Gastrocnemius medialis (tissue), 4 donors: ENCODE measurements at regions of chr3 and their contacts with region 1.

Region 1: GRCh38 chr3:47250309-47251060 is 32.1 kb downstream of the KIF9 start:
- DNase-seq: peak; percentile 31 to 62
- ATAC-seq: peak; percentile 68 to 89
- H3K4me3 ChIP-seq: no peak overlapping the region
- H3K27ac ChIP-seq: peak overlapping the region in 1 of 4 donors; percentile 36
- H3K4me1 ChIP-seq: peaks cover 0 to 2% of the 10 kb centered on the region in 2 donors
- H3K27me3 ChIP-seq: no peaks in the 10 kb centered on the region
- CTCF ChIP-seq: peak; percentile 45 to 62 (median 53)
- POLR2A ChIP-seq: no peak

Region 2: GRCh38 chr3:47324278-47324865 is 73.9 kb after region 1 on chr3:
- in situ Hi-C with region 1: loop called in 3 of 4 experiments (anchors 10 kb)
- intact Hi-C with region 1: loop called (anchors 1 kb)
- DNase-seq: peak; percentile 16 to 42
- ATAC-seq: peak; percentile 94 to 99
- H3K4me3 ChIP-seq: no peak overlapping the region
- H3K27ac ChIP-seq: no peak overlapping the region
- H3K4me1 ChIP-seq: no peaks in the 10 kb centered on the region
- H3K27me3 ChIP-seq: no peaks in the 10 kb centered on the region
- CTCF ChIP-seq: peak; percentile 36 to 77 (median 64)
- POLR2A ChIP-seq: no peak

Region 3: DNA sequence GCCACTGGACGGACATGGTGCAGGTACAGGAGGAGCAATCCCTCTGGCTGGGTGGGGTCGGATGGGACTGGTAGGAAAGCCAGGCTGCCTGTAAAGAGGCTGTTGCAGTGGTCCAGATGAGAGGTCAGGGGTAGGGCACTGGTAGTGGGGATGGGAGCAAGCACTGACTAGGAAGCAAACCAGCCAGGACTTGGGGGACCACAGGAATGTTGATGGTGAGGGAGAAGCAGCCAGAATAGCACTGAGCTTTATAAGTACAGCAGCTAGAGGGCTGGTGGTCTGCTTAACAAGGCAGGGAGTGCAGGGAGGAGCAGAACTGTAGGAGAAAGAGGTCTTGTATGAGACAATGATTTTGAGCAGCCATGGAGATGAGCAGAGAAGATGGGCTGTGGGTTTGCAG is 91.7 kb after region 1 on chr3:
- in situ Hi-C with region 1: no loop called
- intact Hi-C with region 1: no loop called
- DNase-seq: no peak
- ATAC-seq: no peak
- H3K4me3 ChIP-seq: no peak overlapping the region
- H3K27ac ChIP-seq: no peak overlapping the region
- H3K4me1 ChIP-seq: no peaks in the 10 kb centered on the region
- H3K27me3 ChIP-seq: no peaks in the 10 kb centered on the region
- CTCF ChIP-seq: no peak
- POLR2A ChIP-seq: no peak

Region 4: DNA sequence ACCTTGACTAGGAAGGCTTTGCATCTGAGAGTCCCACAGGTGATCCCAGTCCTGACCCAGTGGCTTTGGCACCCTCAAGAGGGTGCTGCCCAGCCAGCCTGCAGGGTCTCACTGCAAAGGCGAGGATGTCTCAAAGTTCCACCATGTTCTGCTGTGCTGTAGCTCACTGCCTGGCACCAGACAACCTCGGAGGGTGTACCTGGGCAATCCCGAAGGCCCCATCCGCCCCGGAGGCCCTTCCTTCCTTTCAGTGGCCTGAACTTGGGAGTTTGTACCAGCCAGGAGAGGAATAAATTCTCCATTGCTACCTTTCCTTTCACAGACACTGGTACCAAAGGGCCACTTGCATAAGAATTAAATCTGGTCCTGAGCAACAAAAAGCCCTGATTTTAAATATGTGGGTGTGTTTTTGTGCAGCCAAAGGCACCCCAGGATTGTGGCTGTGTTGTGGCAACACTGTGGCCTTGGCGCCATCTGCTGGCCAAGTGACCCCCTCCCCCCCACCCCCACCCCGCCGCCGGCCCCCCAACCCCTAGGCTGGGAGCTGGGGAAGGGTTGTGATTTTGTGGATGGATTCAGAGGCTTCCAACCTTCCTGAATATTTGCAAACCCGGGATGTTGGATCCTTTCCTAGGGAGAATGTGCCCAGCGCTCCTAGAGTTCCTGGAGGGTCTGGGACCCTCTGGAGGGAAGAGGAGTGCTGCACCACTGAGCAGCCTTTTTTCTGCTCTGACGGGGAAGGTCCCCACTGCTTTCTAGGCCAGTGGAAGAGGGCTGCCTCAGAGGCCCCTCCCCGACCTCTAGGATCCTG is 120.6 kb after region 1 on chr3:
- in situ Hi-C with region 1: no loop called
- intact Hi-C with region 1: loop called (anchors 2 kb)
- DNase-seq: no peak
- ATAC-seq: no peak
- H3K4me3 ChIP-seq: no peak overlapping the region
- H3K27ac ChIP-seq: no peak overlapping the region
- H3K4me1 ChIP-seq: peaks cover 0 to under 1% of the 10 kb centered on the region in 2 donors
- H3K27me3 ChIP-seq: no peaks in the 10 kb centered on the region
- CTCF ChIP-seq: peak in 2 of 5 experiments; percentile 50 to 63
- POLR2A ChIP-seq: no peak